Cardiac septum (tissue), 1 donor: ENCODE measurements at regions of chr15 and their contacts with region 1.

Region 1: DNA sequence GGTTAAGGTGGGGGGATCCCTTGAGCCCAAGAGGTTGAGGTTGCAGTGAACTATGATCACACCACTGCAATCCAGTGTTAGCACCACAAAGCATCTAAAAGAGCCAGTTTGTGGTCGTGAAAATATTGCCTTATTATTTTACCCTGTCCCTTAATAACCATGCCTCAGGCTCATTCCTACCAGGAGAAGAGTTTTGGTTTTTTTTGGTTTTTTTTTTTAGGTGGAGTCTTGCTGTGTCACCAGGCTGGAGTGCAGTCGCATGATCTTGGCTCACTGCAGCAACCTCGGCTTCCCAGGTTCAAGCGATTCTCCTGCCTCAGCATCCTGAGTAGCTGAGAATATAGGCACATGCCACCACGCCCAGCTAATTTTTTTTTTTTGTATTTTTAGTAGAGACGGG is 17.9 kb upstream of the AVEN start:
- DNase-seq: no peak

Region 2: DNA sequence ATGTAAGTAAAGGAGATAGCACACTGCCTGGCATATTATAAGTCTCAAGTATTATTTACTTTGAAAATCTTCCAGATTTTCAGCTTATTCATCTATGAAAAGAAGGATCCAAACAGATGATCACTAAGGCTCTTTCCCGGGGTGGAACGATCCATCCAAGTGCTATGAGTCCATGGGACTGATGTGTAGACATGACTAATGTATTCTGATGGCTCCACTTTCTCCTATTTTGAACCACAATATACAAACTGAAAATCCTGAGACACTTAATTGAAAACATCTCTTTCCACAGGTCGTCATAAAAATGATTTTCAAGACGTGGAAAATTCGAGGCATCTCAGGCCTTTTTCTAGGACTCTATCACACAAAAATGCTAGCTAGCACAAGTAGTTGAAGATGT is 122.0 kb before region 1 on chr15:
- intact Hi-C with region 1: no loop called
- DNase-seq: no peak

Region 3: GRCh38 chr15:33985290-33985689 is 71.6 kb before region 1 on chr15:
- intact Hi-C with region 1: no loop called
- DNase-seq: no peak

Region 4: DNA sequence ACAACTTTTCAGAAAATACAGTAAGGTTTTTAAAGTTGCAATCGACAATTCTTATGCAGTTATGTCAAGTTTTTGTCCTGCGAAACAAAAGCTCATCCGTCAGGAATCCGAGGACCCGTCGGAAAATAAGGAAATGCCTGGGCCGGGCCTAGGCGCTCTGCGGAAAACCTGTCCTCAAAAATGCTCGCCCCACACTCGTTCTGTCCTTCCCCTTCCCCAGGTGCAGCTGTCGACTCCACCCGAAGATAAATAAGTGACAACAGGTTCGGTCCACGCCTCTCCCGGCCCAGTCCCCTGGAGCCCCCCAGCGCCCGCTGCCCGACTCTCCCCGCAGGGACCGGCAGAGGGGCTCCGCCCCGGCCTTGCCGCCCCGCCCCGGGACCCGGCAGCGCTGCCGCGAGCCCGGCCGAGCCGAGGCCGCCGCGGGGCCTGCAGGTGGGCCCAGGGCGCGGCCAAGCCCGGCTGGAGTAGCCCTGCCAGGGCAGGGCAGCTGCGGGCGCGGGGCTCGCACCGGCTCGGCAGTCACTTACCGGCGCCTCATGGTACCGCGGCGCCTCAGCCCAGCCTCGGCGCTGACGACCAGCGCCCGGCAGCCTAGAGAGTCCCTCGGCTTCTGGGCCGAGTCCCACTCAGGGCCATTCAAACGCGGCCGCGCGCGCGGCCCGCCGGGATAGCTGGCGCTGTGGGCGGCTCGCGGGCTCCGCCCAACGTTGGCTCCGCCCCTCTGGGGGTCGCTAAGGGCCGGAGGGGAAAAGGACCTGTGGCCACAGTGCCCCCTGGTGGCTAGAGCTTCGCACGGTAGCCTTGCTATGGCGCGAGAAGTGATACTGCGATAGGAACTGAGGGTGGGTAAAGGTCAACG is 152.7 kb after region 1 on chr15 and contains the start of gene KATNBL1:
- intact Hi-C with region 1: loop called (anchors 1 kb)
- DNase-seq: peak; percentile 98
- total RNA-seq, gene KATNBL1: 23.3 TPM